Astrocyte of the cerebellum (primary cell): ENCODE measurements at regions of chr1 and their contacts with region 1.

Region 1: GRCh38 chr1:156889802-156890585 is 3.5 kb upstream of the PEAR1 start:
- DNase-seq: peak; percentile 68
- H3K4me3 ChIP-seq: no peak overlapping the region
- CTCF ChIP-seq: peak; percentile 78

Region 2: DNA sequence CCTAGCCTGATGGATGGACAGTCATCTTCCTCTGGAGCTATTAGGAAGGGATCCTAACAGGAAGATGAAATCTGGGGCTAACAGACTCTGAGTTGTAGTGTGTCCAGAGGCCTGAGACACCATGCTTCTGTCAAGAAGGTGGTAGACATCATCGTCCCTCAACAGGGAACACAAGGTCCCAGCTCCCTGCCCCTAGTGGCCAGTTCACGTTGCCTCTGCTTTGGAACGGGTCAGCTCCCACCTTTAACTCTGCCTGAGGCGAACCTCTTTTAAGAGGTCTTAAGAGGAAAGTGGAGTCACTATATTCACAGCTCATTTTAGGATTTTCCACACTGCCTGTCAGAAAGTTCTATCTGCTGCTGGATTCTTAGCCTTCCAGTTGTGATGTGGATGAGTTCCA is 58.7 kb after region 1 on chr1:
- in situ Hi-C with region 1: loop called (anchors 5 kb)
- DNase-seq: no peak
- H3K4me3 ChIP-seq: no peak overlapping the region
- CTCF ChIP-seq: peak; percentile 27